WTC11 (cell line): ENCODE measurements at regions of chr18 and their contacts with region 1.

Region 1: GRCh38 chr18:35143622-35144596 is 96.9 kb upstream of the ZNF397 start:
- DNase-seq: peak; percentile 62
- ATAC-seq: peak; percentile 98
- H3K4me3 Mint-ChIP-seq: no peak overlapping the region
- H3K27ac Mint-ChIP-seq: no peak overlapping the region
- H3K4me1 Mint-ChIP-seq: peaks cover 15% of the 10 kb centered on the region
- H3K27me3 Mint-ChIP-seq: peaks cover 9% of the 10 kb centered on the region
- CTCF ChIP-seq: no peak; the same call in 1 of the 2 replicates

Region 2: DNA sequence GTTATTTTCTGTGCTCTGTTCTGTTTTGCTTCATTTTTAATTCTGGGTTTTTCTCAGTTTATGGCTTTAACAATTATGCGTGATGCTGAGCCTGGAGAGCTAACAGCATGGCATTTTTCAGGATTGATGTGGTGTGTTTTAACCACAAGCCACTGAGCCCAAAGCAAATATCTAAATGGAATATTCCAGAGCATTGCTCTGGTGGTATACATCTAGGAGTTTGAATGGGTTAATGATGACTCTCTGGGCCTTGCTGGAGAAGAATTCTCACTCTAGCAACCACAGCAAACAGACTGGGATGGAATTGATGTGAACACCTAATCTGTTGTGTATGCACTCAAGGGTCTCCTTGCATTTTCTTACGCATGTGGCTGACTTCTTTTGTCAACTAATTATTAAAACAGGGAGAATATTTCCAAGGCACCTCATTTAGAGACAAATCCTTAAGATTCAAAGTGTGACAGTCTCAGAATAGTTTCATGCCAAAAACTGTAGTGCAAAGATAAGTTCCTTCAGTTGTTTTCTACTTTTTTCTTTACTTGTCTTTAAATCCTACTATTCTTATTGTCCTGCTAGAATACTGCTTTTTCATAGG is 269.8 kb before region 1 on chr18:
- CTCF ChIA-PET with region 1: no interaction called
- POLR2A ChIA-PET with region 1: interaction called, 11 read pairs
- DNase-seq: no peak
- ATAC-seq: no peak
- H3K4me3 Mint-ChIP-seq: no peak overlapping the region
- H3K27ac Mint-ChIP-seq: no peak overlapping the region
- H3K4me1 Mint-ChIP-seq: peaks cover 4% of the 10 kb centered on the region; the same call in 1 of the 2 replicates
- H3K27me3 Mint-ChIP-seq: no peaks in the 10 kb centered on the region
- CTCF ChIP-seq: no peak

Region 3: DNA sequence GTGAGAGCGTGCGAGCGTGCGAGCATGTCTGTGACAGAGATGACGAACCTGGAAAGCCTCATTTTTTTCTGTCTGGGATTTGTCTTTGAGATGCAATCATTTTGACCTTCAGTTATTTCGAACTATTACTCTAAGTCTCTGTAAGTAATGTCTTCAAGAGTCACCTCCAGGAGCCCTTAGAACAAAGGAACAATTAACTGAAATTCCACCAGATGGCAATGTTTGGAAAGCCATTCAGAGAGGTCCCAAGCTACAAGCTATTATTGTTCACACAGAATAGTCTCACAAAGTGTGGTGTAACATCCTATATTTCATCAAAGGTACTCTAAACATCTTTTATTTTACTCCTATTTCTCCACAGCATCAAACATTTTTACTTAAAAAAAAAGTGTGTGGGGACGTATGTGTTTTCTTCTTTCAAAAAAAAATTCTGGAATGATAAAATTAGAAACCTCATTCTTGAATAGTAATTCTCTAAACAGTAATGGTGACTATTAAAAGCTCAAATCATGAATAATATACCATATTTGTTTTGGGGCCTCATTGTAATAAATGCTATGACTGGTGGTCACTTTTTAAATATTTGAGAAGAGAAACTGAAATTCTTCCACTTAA is 137.8 kb before region 1 on chr18:
- CTCF ChIA-PET with region 1: interaction called, 26 read pairs
- POLR2A ChIA-PET with region 1: no interaction called
- DNase-seq: no peak
- ATAC-seq: peak; percentile 90
- H3K4me3 Mint-ChIP-seq: no peak overlapping the region
- H3K27ac Mint-ChIP-seq: no peak overlapping the region
- H3K4me1 Mint-ChIP-seq: no peaks in the 10 kb centered on the region
- H3K27me3 Mint-ChIP-seq: no peaks in the 10 kb centered on the region
- CTCF ChIP-seq: no peak

Region 4: DNA sequence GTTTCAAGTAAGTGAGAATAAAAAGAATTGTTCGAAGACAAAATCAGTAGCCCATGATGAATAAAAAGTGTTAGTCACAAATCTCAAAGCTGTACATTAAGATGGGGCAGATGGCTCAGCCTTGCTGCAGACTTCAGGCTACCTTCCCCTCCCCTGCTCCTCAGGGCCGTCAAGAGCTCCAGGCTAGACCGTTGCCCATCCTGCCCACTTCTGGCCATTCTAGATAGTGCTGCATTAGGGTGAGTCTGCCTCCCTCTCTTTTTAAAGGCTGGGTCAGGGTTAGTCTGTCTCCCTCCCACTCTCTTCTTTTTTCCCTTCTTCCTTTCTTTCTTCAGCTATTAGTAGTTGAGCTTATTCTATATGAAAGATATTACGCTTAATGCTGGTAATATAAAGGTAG is 16.7 kb before region 1 on chr18:
- CTCF ChIA-PET with region 1: interaction called, 18 read pairs
- POLR2A ChIA-PET with region 1: no interaction called
- DNase-seq: peak; percentile 44
- ATAC-seq: peak; percentile 88
- H3K4me3 Mint-ChIP-seq: no peak overlapping the region
- H3K27ac Mint-ChIP-seq: no peak overlapping the region
- H3K4me1 Mint-ChIP-seq: peaks cover 11% of the 10 kb centered on the region
- H3K27me3 Mint-ChIP-seq: no peaks in the 10 kb centered on the region
- CTCF ChIP-seq: no peak; the same call in 1 of the 2 replicates